Heart right ventricle (tissue), 16 donors: ENCODE measurements at regions of chr1 and their contacts with region 1.

Region 1: DNA sequence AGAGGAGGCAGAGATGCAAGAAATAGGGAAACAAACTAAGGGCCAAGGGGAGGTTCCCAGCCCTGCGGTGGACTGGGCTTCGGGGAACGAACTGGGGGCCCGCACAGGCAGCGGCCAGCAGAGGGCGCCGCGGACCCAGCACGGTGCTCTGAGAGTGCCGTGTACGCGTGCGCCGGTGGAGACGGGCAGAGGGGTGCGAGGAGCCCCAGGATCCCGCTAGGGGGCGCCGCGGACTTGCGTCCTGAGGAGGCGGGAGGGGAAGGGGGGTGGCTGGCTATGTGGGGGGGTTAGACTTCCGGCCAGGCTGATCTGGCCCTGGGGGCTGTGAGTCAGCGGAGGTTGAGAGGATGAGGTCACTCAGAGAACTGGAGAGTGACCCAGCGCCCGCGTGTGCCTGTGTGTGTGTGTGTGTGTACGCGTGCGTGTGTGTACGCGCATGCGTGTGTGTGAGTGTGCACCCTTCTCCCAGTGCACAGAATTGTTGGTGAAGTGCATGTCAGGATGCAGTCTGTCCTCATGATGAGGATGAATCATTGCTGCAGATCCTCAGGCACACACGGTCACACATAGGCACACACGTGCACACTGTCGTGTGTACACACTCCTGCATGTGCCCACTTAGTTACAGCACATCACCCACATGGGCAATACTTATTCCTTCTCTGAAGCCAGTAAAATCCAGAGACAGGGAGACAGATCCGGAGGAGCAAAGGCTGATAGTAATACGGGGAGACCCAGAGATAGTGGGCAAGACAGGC is 17.0 kb downstream of the NES start:
- DNase-seq: peak; percentile 97 to 98
- ATAC-seq: peak; percentile 82 to 91 (median 85)
- H3K4me3 ChIP-seq: peak overlapping the region in 8 of 10 donors; percentile 18 to 46 (median 39)
- H3K27ac ChIP-seq: peak overlapping the region; percentile 68 to 99 (median 96)
- H3K4me1 ChIP-seq: peaks cover 54 to 85% (median 80%) of the 10 kb centered on the region in 9 donors
- H3K27me3 ChIP-seq: peaks cover 0 to 28% (median 18%) of the 10 kb centered on the region in 7 donors
- CTCF ChIP-seq: peak; percentile 93 to 100 (median 99)

Region 2: GRCh38 chr1:156310962-156311361 is 349.2 kb before region 1 on chr1:
- intact Hi-C with region 1: no loop called
- DNase-seq: no peak
- ATAC-seq: peak in 1 of 8 donors; percentile 52
- H3K4me3 ChIP-seq: no peak overlapping the region
- H3K27ac ChIP-seq: no peak overlapping the region
- H3K4me1 ChIP-seq: no peaks in the 10 kb centered on the region
- H3K27me3 ChIP-seq: no peaks in the 10 kb centered on the region
- CTCF ChIP-seq: no peak

Region 3: GRCh38 chr1:156625436-156626078 is 34.6 kb before region 1 on chr1:
- intact Hi-C with region 1: loop called (anchors 1 to 5 kb)
- DNase-seq: peak; percentile 43 to 73
- ATAC-seq: peak; percentile 27 to 75 (median 56)
- H3K4me3 ChIP-seq: peak overlapping the region; percentile 34 to 58 (median 49)
- H3K27ac ChIP-seq: peak overlapping the region in 7 of 10 donors; percentile 31 to 76 (median 64)
- H3K4me1 ChIP-seq: peaks cover 10 to 34% (median 24%) of the 10 kb centered on the region in 9 donors
- H3K27me3 ChIP-seq: peaks cover 19 to 100% (median 70%) of the 10 kb centered on the region in 7 donors
- CTCF ChIP-seq: peak; percentile 54 to 87 (median 81)

Region 4: GRCh38 chr1:156704930-156705320 is 44.8 kb after region 1 on chr1:
- intact Hi-C with region 1: no loop called
- DNase-seq: peak in 1 of 2 donors; percentile 33
- ATAC-seq: peak in 1 of 8 donors; percentile 30
- H3K4me3 ChIP-seq: peak overlapping the region in 9 of 10 donors; percentile 31 to 53 (median 48)
- H3K27ac ChIP-seq: no peak overlapping the region
- H3K4me1 ChIP-seq: peaks cover 17 to 58% (median 36%) of the 10 kb centered on the region in 9 donors
- H3K27me3 ChIP-seq: peaks cover 5 to 70% (median 53%) of the 10 kb centered on the region in 7 donors
- CTCF ChIP-seq: no peak